ENCODE measurements at regions of chr7 and their contacts with region 1.

Region 1: DNA sequence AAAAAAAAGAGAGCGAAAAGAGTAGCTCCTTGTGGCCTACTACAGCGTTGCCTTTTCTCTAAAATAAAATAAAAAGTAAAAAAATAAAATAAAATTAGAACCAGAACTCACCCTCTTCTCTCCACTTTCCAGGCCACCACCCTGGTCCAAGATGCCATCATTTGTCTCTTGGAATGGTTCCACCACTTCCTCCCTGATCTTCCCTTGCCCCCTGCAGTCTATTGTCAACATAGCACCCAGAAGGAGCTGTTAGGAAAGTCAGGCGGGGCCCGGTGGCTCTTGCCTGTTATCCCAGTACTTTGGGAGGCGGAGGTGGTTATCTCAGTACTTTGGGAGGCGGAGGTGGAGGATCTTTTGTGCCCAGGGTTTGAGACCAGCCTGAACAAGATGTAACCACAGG is 7.6 kb upstream of the GRID2IP start:
- DNase-seq: no peak
- H3K4me3 ChIP-seq: no peak overlapping the region
- H3K4me3 Mint-ChIP-seq: no peak overlapping the region
- H3K27ac ChIP-seq: no peak overlapping the region
- H3K27ac Mint-ChIP-seq: peak overlapping the region in 1 of 7 donors; percentile 26
- H3K4me1 ChIP-seq: peaks cover 7% of the 10 kb centered on the region
- H3K4me1 Mint-ChIP-seq: peaks cover 2 to 4% (median 3%) of the 10 kb centered on the region in 4 donors
- H3K27me3 ChIP-seq: no peaks in the 10 kb centered on the region
- H3K27me3 Mint-ChIP-seq: peaks cover 0 to 3% of the 10 kb centered on the region in 2 donors

Region 2: GRCh38 chr7:6489612-6490011 is 69.2 kb before region 1 on chr7:
- CTCF ChIA-PET with region 1: no interaction called
- POLR2A ChIA-PET with region 1: no interaction called
- intact Hi-C with region 1: no loop called
- DNase-seq: no peak
- H3K4me3 ChIP-seq: no peak overlapping the region
- H3K4me3 Mint-ChIP-seq: no peak overlapping the region
- H3K27ac ChIP-seq: no peak overlapping the region
- H3K27ac Mint-ChIP-seq: no peak overlapping the region
- H3K4me1 ChIP-seq: peaks cover 3% of the 10 kb centered on the region
- H3K4me1 Mint-ChIP-seq: peaks cover under 1 to 4% (median 3%) of the 10 kb centered on the region in 4 donors
- H3K27me3 ChIP-seq: no peaks in the 10 kb centered on the region
- H3K27me3 Mint-ChIP-seq: no peaks in the 10 kb centered on the region

Region 3: DNA sequence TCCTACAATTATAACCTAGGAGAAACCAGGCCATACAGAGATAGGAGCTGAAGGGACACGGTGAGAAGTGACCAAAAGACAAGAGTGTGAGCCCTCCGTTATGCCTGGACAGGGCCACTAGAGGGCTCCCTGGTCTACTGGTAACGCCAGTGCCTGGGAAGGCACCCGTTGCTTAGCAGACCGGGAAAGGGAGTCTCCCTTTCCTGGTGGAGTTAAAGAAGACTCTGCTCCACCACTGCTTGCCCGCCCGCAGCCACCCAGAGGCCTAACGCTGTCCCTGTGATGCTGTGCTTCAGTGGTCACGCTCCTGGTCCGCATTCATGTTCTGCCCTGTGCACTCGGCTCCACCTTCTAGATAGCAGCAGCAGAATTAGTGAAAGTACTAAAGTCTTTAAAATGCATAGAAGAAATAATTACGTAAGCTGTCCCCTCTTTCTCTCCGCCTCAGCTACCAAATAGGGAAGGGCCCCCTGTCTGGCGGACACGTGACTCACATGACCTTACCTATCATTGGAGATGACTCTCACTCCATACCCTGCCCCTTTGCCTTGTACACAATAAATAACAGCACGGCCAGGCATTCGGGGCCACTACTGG is 42.4 kb before region 1 on chr7:
- CTCF ChIA-PET with region 1: interaction called, 21 read pairs
- POLR2A ChIA-PET with region 1: no interaction called
- intact Hi-C with region 1: loop called (anchors 2 kb)
- DNase-seq: peak; percentile 50 to 60 (median 58)
- H3K4me3 ChIP-seq: peak overlapping the region; percentile 17 to 39
- H3K4me3 Mint-ChIP-seq: peak overlapping the region; percentile 70 to 89 (median 84)
- H3K27ac ChIP-seq: no peak overlapping the region
- H3K27ac Mint-ChIP-seq: peak overlapping the region in 4 of 7 donors; percentile 5 to 76 (median 38)
- H3K4me1 ChIP-seq: peaks cover 4% of the 10 kb centered on the region
- H3K4me1 Mint-ChIP-seq: peaks cover 4 to 10% (median 6%) of the 10 kb centered on the region in 4 donors
- H3K27me3 ChIP-seq: no peaks in the 10 kb centered on the region
- H3K27me3 Mint-ChIP-seq: no peaks in the 10 kb centered on the region